Activated B cell treated with CpG ODN at 0.5 μM for 24 hours (primary cell): ENCODE measurements at regions of chr14 and their contacts with region 1.

Region 1: GRCh38 chr14:61662437-61663311 is 32.6 kb upstream of the HIF1A start:
- DNase-seq: peak; percentile 26
- ATAC-seq: peak; percentile 78
- H3K4me3 Mint-ChIP-seq: peak overlapping the region; percentile 78
- H3K27ac Mint-ChIP-seq: peak overlapping the region; percentile 91
- H3K4me1 Mint-ChIP-seq: peaks cover 57% of the 10 kb centered on the region
- H3K27me3 Mint-ChIP-seq: no peaks in the 10 kb centered on the region
- CTCF ChIP-seq: no peak

Region 2: GRCh38 chr14:61503167-61503801 is 159.4 kb before region 1 on chr14:
- CTCF ChIA-PET with region 1: interaction called, 12 read pairs
- POLR2A ChIA-PET with region 1: interaction called, 60 read pairs
- intact Hi-C with region 1: loop called (anchors 1 kb)
- DNase-seq: no peak
- ATAC-seq: peak; percentile 88
- H3K4me3 Mint-ChIP-seq: peak overlapping the region; percentile 82
- H3K27ac Mint-ChIP-seq: peak overlapping the region; percentile 99
- H3K4me1 Mint-ChIP-seq: peaks cover 97% of the 10 kb centered on the region
- H3K27me3 Mint-ChIP-seq: no peaks in the 10 kb centered on the region
- CTCF ChIP-seq: no peak

Region 3: DNA sequence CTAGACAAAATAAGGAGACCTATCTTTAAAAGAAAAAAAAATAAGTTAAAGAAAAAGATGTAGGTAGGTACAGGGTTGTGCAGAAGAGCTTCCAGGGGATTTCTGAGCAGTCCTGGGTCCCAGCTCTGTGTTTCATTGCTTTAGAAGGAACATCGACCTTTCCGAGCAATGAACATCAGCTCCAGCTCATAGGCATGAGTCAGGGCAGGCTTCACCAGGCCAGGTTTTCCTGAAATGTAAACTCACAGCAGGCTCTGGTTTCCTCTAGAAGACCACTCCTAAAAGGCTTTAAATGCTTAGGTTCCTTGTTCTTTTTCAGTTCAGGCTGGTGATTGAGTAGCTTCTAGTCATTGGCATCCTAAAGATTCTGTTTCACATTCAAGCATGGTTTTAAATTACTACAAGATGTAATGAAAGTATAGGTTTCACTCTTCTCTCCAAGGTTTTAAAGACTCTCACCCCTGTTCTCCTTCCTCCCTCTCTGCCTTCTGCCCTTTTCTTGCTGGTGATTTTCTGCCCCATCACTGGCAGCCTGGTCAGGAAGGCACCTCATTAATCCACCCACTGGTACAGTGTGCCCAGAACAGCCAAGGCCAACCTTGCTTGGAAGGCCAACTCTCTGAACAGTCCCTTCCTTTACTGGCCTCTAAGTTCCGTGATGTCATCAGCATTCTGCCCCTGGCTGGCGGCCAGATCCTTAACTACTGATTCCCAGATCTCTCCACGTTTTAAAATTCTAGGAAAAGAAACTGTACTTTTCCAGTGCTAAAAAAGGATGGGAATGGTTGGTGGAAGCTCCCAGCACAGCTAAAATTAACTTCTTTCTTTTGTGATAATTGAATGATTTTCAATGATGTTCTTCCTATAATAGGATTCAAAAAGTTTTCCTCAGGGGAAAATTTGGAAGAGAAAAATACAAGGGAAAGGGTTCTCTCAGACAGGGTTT is 76.8 kb before region 1 on chr14:
- CTCF ChIA-PET with region 1: no interaction called
- POLR2A ChIA-PET with region 1: no interaction called
- intact Hi-C with region 1: loop called (anchors 5 kb)
- DNase-seq: no peak
- ATAC-seq: no peak
- H3K4me3 Mint-ChIP-seq: no peak overlapping the region
- H3K27ac Mint-ChIP-seq: no peak overlapping the region
- H3K4me1 Mint-ChIP-seq: peaks cover 27% of the 10 kb centered on the region
- H3K27me3 Mint-ChIP-seq: no peaks in the 10 kb centered on the region
- CTCF ChIP-seq: no peak

Region 4: DNA sequence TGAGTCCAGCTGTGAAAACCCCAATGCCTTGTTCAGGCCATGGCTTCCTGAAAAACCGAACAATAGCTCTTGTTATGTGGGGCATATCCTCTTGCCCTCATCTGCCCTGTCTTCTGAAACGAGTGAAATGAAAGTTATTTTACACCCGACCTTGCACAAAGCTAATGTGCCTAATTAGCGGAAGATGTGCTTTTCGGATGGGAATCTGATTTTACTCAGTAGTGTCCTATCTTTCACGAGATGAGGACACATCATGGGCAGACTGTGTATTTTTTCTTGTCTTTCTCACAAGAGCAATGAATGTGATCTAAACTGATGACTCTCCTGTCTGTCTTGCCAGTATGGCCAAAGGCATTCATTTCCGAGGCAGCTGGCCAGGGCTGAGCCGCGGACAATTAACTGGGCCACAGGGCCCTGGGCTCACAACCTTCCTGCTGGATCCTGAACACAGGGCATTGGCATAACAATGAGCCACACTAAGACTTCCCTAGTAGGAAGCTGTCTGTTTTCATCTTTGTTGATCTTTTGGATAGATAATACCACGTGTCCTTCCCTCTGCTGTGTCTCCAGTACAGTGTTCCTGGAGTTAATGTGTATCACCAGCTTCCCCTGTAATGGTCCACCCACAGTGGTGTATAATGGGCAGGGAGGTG is 53.4 kb before region 1 on chr14:
- CTCF ChIA-PET with region 1: no interaction called
- POLR2A ChIA-PET with region 1: no interaction called
- intact Hi-C with region 1: no loop called
- DNase-seq: no peak
- ATAC-seq: no peak
- H3K4me3 Mint-ChIP-seq: no peak overlapping the region
- H3K27ac Mint-ChIP-seq: no peak overlapping the region
- H3K4me1 Mint-ChIP-seq: peaks cover 10% of the 10 kb centered on the region
- H3K27me3 Mint-ChIP-seq: no peaks in the 10 kb centered on the region
- CTCF ChIP-seq: no peak

Region 5: GRCh38 chr14:61620130-61620946 is 42.3 kb before region 1 on chr14:
- CTCF ChIA-PET with region 1: no interaction called
- POLR2A ChIA-PET with region 1: no interaction called
- intact Hi-C with region 1: no loop called
- DNase-seq: no peak
- ATAC-seq: no peak
- H3K4me3 Mint-ChIP-seq: no peak overlapping the region
- H3K27ac Mint-ChIP-seq: no peak overlapping the region
- H3K4me1 Mint-ChIP-seq: peaks cover 6% of the 10 kb centered on the region
- H3K27me3 Mint-ChIP-seq: no peaks in the 10 kb centered on the region
- CTCF ChIP-seq: no peak

Region 6: DNA sequence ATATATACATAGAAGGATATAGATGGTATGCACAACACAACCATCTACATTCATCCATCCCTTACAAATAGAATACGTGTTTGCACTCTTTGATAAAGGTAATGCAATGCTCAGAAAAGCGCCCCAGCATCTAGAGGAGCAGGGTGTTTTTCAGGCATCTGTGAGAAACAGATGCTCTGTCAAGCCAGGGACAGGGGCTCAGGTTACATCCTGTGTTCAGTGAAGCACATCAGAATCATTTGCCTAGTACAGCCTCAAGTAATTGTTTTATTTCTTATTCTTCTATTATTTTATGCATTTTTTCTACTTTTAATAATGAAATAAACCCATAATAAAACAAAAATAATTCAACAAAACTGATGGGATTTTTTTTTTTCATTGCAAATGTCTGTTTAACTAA is 17.8 kb before region 1 on chr14:
- CTCF ChIA-PET with region 1: no interaction called
- POLR2A ChIA-PET with region 1: interaction called, 4 read pairs
- intact Hi-C with region 1: loop called (anchors 2 kb)
- DNase-seq: no peak
- ATAC-seq: peak; percentile 79
- H3K4me3 Mint-ChIP-seq: no peak overlapping the region
- H3K27ac Mint-ChIP-seq: no peak overlapping the region
- H3K4me1 Mint-ChIP-seq: peaks cover 29% of the 10 kb centered on the region
- H3K27me3 Mint-ChIP-seq: no peaks in the 10 kb centered on the region
- CTCF ChIP-seq: no peak

Region 7: GRCh38 chr14:61894452-61895077 is 231.9 kb after region 1 on chr14:
- CTCF ChIA-PET with region 1: no interaction called
- POLR2A ChIA-PET with region 1: interaction called, 3 read pairs
- intact Hi-C with region 1: loop called (anchors 2 kb)
- DNase-seq: peak; percentile 30
- ATAC-seq: no peak
- H3K4me3 Mint-ChIP-seq: no peak overlapping the region
- H3K27ac Mint-ChIP-seq: no peak overlapping the region
- H3K4me1 Mint-ChIP-seq: peaks cover 30% of the 10 kb centered on the region
- H3K27me3 Mint-ChIP-seq: no peaks in the 10 kb centered on the region
- CTCF ChIP-seq: peak; percentile 57